CD8-positive, alpha-beta T cell (primary cell): ENCODE measurements at regions of chr5 and their contacts with region 1.

Region 1: GRCh38 chr5:111781200-111781599 is 24.2 kb upstream of the NREP start:
- DNase-seq: no peak
- ATAC-seq: no peak
- H3K4me3 ChIP-seq: no peak overlapping the region
- H3K4me3 Mint-ChIP-seq: no peak overlapping the region
- H3K27ac ChIP-seq: no peak overlapping the region
- H3K27ac Mint-ChIP-seq: no peak overlapping the region
- H3K4me1 ChIP-seq: no peaks in the 10 kb centered on the region
- H3K4me1 Mint-ChIP-seq: no peaks in the 10 kb centered on the region
- H3K27me3 ChIP-seq: no peaks in the 10 kb centered on the region
- H3K27me3 Mint-ChIP-seq: no peaks in the 10 kb centered on the region
- CTCF ChIP-seq: no peak

Region 2: DNA sequence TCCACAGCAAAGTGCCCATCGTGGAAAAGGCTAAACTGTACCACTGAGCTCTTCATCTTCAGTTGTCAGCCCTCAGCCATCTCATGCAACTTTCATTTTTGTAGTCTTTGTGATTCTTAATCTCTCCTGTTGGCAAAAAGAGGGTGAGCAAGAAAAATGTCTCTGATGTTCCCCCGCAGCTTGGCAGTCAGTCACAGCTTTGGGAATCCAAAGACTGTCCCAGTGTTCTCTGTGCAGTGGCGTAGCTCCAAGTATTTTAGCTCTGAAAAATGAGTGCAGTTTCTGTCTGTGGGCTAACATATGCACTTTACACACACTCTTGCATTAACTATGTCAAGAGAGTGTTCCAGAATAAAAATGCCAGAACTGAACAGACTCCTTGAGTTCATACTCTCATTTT is 1426.9 kb before region 1 on chr5:
- CTCF ChIA-PET with region 1: no interaction called
- POLR2A ChIA-PET with region 1: no interaction called
- intact Hi-C with region 1: loop called in 1 of 2 experiments (anchors 10 kb)
- DNase-seq: no peak
- ATAC-seq: no peak
- H3K4me3 ChIP-seq: no peak overlapping the region
- H3K4me3 Mint-ChIP-seq: no peak overlapping the region
- H3K27ac ChIP-seq: no peak overlapping the region
- H3K27ac Mint-ChIP-seq: no peak overlapping the region
- H3K4me1 ChIP-seq: no peaks in the 10 kb centered on the region
- H3K4me1 Mint-ChIP-seq: no peaks in the 10 kb centered on the region
- H3K27me3 ChIP-seq: no peaks in the 10 kb centered on the region
- H3K27me3 Mint-ChIP-seq: no peaks in the 10 kb centered on the region
- CTCF ChIP-seq: no peak